Activated naive CD4-positive, alpha-beta T cell treated with anti-CD3 and anti-CD28 coated beads for 36 hours (primary cell): ENCODE measurements at regions of chr10 and their contacts with region 1.

Region 1: DNA sequence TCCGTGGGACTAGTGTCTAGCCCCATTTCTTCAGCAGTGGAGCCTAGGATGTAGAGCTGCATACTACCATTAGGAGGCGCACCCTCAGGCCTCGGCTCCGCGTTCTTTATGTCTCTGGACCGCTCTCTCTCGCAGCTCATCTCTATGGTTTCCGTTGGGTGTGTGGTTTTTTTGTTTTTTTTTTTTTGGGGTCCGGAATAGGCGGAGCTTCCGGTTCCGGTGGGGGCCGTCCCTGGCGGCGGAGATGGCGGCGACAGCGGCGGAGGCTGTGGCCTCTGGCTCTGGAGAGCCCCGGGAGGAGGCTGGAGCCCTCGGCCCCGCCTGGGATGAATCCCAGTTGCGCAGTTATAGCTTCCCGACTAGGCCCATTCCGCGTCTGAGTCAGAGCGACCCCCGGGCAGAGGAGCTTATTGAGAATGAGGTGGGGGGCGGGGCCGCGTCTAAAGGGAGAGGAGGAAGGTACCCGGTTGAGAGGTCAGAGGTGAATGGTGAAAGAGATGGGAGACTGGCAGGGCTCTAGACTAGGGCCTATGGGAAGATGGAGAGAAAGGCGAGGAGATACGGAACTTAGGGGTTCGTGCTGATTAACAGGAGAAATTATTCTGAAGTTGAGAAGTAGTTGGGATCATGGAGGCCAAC is at the start of gene HIF1AN:
- DNase-seq: peak; percentile 95
- H3K4me3 Mint-ChIP-seq: no peak within 1 kb of the TSS
- H3K27ac Mint-ChIP-seq: peak within 1 kb of the TSS; percentile 26
- H3K4me1 Mint-ChIP-seq: peaks cover 18% of the 10 kb centered on the region
- H3K27me3 Mint-ChIP-seq: no peaks in the 10 kb centered on the region
- total RNA-seq, gene HIF1AN: 34.6 to 38.4 TPM

Region 2: GRCh38 chr10:100524638-100525037 is 11.2 kb before region 1 on chr10:
- CTCF ChIA-PET with region 1: interaction called, 19 read pairs
- intact Hi-C with region 1: no loop called
- DNase-seq: no peak
- H3K4me3 Mint-ChIP-seq: no peak overlapping the region
- H3K27ac Mint-ChIP-seq: peak overlapping the region; percentile 68
- H3K4me1 Mint-ChIP-seq: peaks cover 22% of the 10 kb centered on the region
- H3K27me3 Mint-ChIP-seq: no peaks in the 10 kb centered on the region

Region 3: DNA sequence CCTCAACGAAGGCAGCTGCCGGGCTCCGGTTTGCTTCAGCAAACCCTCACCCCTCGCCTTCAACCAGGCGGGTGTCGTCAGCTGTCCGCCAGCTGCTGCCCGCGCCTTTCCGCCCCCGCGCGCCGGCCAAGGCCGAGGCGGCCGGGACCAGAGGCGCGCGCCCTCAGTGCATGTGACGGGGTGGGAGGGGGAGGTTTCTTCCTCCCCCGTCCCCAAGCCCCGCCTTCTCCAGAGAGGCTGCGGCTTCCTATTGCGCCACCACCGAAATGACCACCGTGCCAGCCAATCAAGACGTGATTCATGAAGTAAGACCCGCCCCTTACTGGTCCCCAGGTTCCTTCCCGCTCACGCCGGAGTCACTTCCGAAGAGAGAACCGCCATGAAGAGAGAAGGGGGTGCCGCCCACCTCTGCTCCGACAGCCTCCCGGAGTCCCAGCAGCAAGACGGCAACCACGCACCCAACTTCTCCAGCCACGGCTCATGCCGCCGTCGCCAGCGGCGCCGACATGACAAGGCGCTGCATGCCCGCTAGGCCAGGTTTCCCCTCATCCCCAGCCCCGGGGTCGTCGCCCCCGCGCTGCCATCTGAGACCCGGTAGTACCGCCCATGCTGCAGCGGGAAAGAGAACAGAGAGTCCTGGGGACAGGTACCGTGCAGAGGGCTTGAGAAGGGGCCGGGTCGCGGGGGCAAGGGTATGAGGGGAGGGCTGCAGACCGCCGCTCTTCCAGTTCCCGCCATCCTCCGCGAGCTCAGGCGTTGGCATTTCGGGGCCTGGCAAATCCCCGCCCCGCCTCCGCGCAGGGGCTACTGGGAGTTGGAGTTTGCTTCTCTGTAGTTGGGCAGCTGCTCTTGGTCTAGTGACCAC is 377.0 kb after region 1 on chr10 and contains the start of gene SLF2:
- CTCF ChIA-PET with region 1: no interaction called
- intact Hi-C with region 1: loop called (anchors 1 kb)
- DNase-seq: peak; percentile 98
- H3K4me3 Mint-ChIP-seq: peak within 1 kb of the TSS; percentile 98
- H3K27ac Mint-ChIP-seq: peak within 1 kb of the TSS; percentile 99
- H3K4me1 Mint-ChIP-seq: peaks cover 42% of the 10 kb centered on the region
- H3K27me3 Mint-ChIP-seq: no peaks in the 10 kb centered on the region
- total RNA-seq, gene SLF2: 29.3 to 30.3 TPM

Region 4: GRCh38 chr10:100939763-100940344 is 404.0 kb after region 1 on chr10:
- CTCF ChIA-PET with region 1: no interaction called
- intact Hi-C with region 1: loop called (anchors 5 kb)
- DNase-seq: no peak
- H3K4me3 Mint-ChIP-seq: no peak overlapping the region
- H3K27ac Mint-ChIP-seq: no peak overlapping the region
- H3K4me1 Mint-ChIP-seq: peaks cover 21% of the 10 kb centered on the region
- H3K27me3 Mint-ChIP-seq: no peaks in the 10 kb centered on the region